ENCODE measurements at regions of chr11 and their contacts with region 1.

Region 1: GRCh38 chr11:14308114-14308896 is 50.7 kb downstream of the RRAS2 start:
- DNase-seq: peak; percentile 50
- ATAC-seq: peak; percentile 88
- H3K4me3 ChIP-seq: no peak overlapping the region
- H3K27ac ChIP-seq: no peak overlapping the region
- H3K4me1 ChIP-seq: peaks cover 11% of the 10 kb centered on the region
- H3K27me3 ChIP-seq: no peaks in the 10 kb centered on the region
- CTCF ChIP-seq: peak; percentile 57
- EP300 ChIP-seq: no peak
- POLR2A ChIP-seq: no peak
- RAD21 ChIP-seq: no peak

Region 2: GRCh38 chr11:14358729-14359439 is 50.6 kb after region 1 on chr11 and contains the start of gene RRAS2:
- CTCF ChIA-PET with region 1: no interaction called
- POLR2A ChIA-PET with region 1: no interaction called
- in situ Hi-C with region 1: no loop called
- intact Hi-C with region 1: loop called (anchors 5 kb)
- DNase-seq: peak; percentile 69
- ATAC-seq: peak; percentile 92
- H3K4me3 ChIP-seq: peak within 1 kb of the TSS; percentile 90 to 93 (median 93)
- H3K27ac ChIP-seq: peak within 1 kb of the TSS; percentile 69
- H3K4me1 ChIP-seq: peaks cover 34% of the 10 kb centered on the region
- H3K27me3 ChIP-seq: no peaks in the 10 kb centered on the region; a peak in 1 of 5 replicates
- CTCF ChIP-seq: no peak; the same call in 1 of the 2 replicates
- EP300 ChIP-seq: 0 out of 4 replicates have a peak, but pooled peaks of 1 of the 2 experiments have one; percentile 34
- POLR2A ChIP-seq: peak; percentile 76 to 93
- RAD21 ChIP-seq: no peak
- total RNA-seq, gene RRAS2: 44.1 and 62.9 TPM in 2 replicates